ENCODE measurements at regions of chr7 and their contacts with region 1.

Region 1: GRCh38 chr7:16801111-16801542 is 3.7 kb downstream of the AGR2 start:
- DNase-seq: peak; percentile 53 to 71 (median 66)
- H3K4me3 ChIP-seq: no peak overlapping the region
- H3K27ac ChIP-seq: no peak overlapping the region
- H3K4me1 ChIP-seq: peaks cover 0 to 2% (median under 1%) of the 10 kb centered on the region in 4 experiments
- H3K27me3 ChIP-seq: no peaks in the 10 kb centered on the region

Region 2: DNA sequence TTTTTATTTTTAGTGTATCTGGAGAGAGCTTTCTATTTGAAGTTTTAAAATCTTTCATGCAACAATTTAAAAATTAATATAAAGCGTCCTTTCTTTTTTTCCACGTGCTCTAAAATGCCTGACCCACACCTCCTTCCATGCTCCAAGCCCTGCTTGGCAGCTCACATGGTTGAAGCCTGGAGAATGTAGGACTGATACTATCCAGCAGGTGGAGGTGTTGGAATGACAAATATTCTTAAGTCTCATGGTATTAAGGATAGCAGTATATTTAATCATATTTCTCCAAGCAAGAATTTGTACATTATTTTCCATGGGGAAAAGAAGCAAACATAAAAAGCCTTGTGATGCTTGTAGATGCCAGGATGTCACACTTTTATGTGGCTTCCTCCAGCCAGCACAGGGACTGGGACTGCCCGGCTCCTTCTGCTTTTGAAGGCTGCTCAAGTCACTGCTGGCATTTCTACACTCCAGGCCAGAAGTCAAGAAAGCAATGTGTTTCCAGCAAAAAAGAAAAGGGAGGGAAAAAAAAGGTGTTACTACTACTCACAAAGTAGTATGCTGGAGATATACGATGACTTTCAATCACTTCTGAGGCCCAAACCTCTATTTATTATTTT is 105.4 kb before region 1 on chr7:
- CTCF ChIA-PET with region 1: interaction called, 21 read pairs
- POLR2A ChIA-PET with region 1: no interaction called
- DNase-seq: peak; percentile 55 to 76 (median 71)
- H3K4me3 ChIP-seq: no peak overlapping the region
- H3K27ac ChIP-seq: no peak overlapping the region
- H3K4me1 ChIP-seq: no peaks in the 10 kb centered on the region
- H3K27me3 ChIP-seq: no peaks in the 10 kb centered on the region

Region 3: DNA sequence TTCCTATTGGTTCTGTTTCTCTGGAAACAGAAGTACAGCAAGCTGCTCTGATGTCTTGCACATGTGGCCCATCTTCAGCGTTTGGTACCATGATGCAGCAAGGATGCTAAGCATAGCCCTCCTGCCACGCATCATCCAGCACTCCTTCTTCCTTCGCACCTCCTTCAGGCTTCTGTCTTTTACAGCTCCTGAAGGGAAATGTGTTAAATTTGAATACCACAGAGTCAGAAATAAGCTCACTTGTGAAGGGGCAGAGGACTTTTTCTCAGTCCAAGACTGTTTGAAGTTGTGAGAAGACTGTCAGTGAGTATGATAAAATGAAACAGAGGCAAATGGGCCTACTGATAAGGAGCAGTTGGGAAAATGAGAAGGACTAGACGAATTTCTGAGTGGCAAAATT is 26.8 kb before region 1 on chr7:
- CTCF ChIA-PET with region 1: no interaction called
- POLR2A ChIA-PET with region 1: no interaction called
- DNase-seq: no peak
- H3K4me3 ChIP-seq: no peak overlapping the region
- H3K27ac ChIP-seq: no peak overlapping the region
- H3K4me1 ChIP-seq: peaks cover 3 to 17% (median 11%) of the 10 kb centered on the region in 4 experiments
- H3K27me3 ChIP-seq: no peaks in the 10 kb centered on the region

Region 4: GRCh38 chr7:16817536-16817935 is 16.4 kb after region 1 on chr7:
- CTCF ChIA-PET with region 1: interaction called, 17 read pairs
- POLR2A ChIA-PET with region 1: no interaction called
- DNase-seq: peak; percentile 14 to 67 (median 51)
- H3K4me3 ChIP-seq: no peak overlapping the region
- H3K27ac ChIP-seq: no peak overlapping the region
- H3K4me1 ChIP-seq: peaks cover 11 to 42% (median 14%) of the 10 kb centered on the region in 4 experiments
- H3K27me3 ChIP-seq: no peaks in the 10 kb centered on the region

Region 5: DNA sequence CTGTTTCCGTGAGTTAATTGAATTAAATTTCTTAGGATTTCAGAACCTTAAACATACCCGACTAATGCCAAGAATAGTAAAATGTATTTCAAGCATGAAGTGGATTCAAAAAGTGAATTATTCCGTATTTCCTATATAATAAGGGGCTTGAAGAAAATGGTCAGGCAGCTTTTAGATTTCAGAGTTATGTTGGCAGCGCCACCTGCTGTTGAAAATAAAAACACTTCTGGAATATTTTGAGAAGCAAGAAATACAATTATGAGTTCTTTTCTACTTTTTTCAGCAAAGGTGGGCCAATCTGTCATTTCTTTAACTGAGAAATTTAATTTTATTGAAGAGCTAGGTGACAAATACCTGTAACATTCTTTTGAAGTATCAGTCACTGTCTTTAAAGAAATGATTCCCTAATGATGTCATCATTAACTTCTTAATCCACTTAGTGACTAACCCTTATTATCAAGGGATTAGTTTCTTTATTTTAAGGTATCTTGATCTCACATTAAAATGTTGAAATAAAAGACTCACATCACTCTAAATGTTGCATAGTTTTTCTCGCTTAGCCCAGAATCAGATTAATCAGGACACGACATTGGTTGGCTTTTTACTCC is 117.3 kb after region 1 on chr7:
- CTCF ChIA-PET with region 1: interaction called, 41 read pairs
- POLR2A ChIA-PET with region 1: no interaction called
- DNase-seq: peak; percentile 42 to 75 (median 65)
- H3K4me3 ChIP-seq: no peak overlapping the region
- H3K27ac ChIP-seq: no peak overlapping the region
- H3K4me1 ChIP-seq: peaks cover 0 to 3% (median 1%) of the 10 kb centered on the region in 4 experiments
- H3K27me3 ChIP-seq: no peaks in the 10 kb centered on the region

Region 6: DNA sequence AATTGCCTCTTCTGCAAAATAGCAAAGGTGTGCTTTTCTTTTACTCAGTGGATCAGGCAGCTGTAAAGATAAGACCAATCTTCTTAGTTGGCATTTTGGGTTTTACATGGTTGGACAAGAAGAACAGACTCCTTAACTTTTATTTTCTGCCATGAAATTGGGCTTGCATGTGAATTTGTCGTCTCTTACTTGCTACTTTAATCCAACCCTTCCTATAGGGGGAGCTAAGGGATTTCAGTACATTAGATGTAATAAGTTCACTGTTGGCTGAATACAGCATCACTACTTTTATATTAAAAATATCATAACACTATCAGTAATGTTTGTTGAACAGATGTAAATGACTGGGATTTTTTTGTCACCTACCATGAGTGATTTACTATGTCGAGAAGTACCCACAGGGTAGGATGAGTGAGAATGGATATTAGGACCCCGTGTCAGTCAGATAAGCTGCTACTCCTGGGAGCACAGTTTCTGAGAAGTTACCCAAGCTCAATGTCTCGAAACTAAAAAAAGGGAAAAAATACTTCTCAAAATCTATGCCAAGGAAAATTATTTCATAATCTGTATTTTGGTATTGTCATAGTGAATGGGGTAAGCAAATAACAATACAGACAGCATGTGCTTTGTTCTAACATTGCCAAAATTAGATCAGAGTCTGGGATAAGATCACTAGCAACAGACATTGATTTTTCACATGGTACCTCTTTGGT is 208.0 kb after region 1 on chr7:
- CTCF ChIA-PET with region 1: no interaction called
- POLR2A ChIA-PET with region 1: no interaction called
- DNase-seq: peak; percentile 58 to 78 (median 73)
- H3K4me3 ChIP-seq: no peak overlapping the region
- H3K27ac ChIP-seq: no peak overlapping the region
- H3K4me1 ChIP-seq: peaks cover 0 to 10% (median 3%) of the 10 kb centered on the region in 4 experiments
- H3K27me3 ChIP-seq: no peaks in the 10 kb centered on the region